ENCODE measurements at regions of chr19 and their contacts with region 1.

Region 1: GRCh38 chr19:12666265-12667048 is at the starts of genes MAN2B1 and WDR83:
- DNase-seq: peak; percentile 77 to 84 (median 79)
- H3K4me3 ChIP-seq: peak within 1 kb of the TSS; percentile 83
- H3K4me3 Mint-ChIP-seq: peak within 1 kb of the TSS; percentile 87 to 100 (median 97)
- H3K27ac ChIP-seq: peak within 1 kb of the TSS; percentile 72
- H3K27ac Mint-ChIP-seq: peak within 1 kb of the TSS; percentile 89 to 100 (median 98)
- H3K4me1 ChIP-seq: peaks cover 40% of the 10 kb centered on the region
- H3K4me1 Mint-ChIP-seq: peaks cover 43 to 59% (median 46%) of the 10 kb centered on the region in 3 donors
- H3K27me3 ChIP-seq: no peaks in the 10 kb centered on the region
- H3K27me3 Mint-ChIP-seq: no peaks in the 10 kb centered on the region
- total RNA-seq, gene MAN2B1: 83.8 to 85.3 TPM
- total RNA-seq, gene WDR83: 18.8 to 19.9 TPM

Region 2: GRCh38 chr19:12564016-12564664 is 102.3 kb before region 1 on chr19:
- CTCF ChIA-PET with region 1: interaction called, 19 read pairs
- POLR2A ChIA-PET with region 1: interaction called, 3 read pairs
- DNase-seq: peak; percentile 80 to 90 (median 86)
- H3K4me3 ChIP-seq: no peak overlapping the region
- H3K4me3 Mint-ChIP-seq: no peak overlapping the region
- H3K27ac ChIP-seq: no peak overlapping the region
- H3K27ac Mint-ChIP-seq: peak overlapping the region in 4 of 8 donors; percentile 2 to 71 (median 44)
- H3K4me1 ChIP-seq: no peaks in the 10 kb centered on the region
- H3K4me1 Mint-ChIP-seq: peaks cover 4 to 6% (median 5%) of the 10 kb centered on the region in 3 donors
- H3K27me3 ChIP-seq: no peaks in the 10 kb centered on the region
- H3K27me3 Mint-ChIP-seq: peaks cover 0 to 3% of the 10 kb centered on the region in 2 donors

Region 3: GRCh38 chr19:12610540-12611360 is 55.7 kb before region 1 on chr19 and contains the starts of genes ZNF490 and ZNF791:
- CTCF ChIA-PET with region 1: interaction called, 6 read pairs
- POLR2A ChIA-PET with region 1: interaction called, 12 read pairs
- DNase-seq: peak; percentile 93 to 98 (median 95)
- H3K4me3 ChIP-seq: peak within 1 kb of the TSS; percentile 93
- H3K4me3 Mint-ChIP-seq: peak within 1 kb of the TSS; percentile 99 to 100 (median 100)
- H3K27ac ChIP-seq: peak within 1 kb of the TSS; percentile 92
- H3K27ac Mint-ChIP-seq: peak within 1 kb of the TSS; percentile 94 to 100 (median 100)
- H3K4me1 ChIP-seq: peaks cover 42% of the 10 kb centered on the region
- H3K4me1 Mint-ChIP-seq: peaks cover 35 to 64% (median 48%) of the 10 kb centered on the region in 3 donors
- H3K27me3 ChIP-seq: no peaks in the 10 kb centered on the region
- H3K27me3 Mint-ChIP-seq: no peaks in the 10 kb centered on the region
- total RNA-seq, gene ZNF490: 8.0 to 8.4 TPM
- total RNA-seq, gene ZNF791: 23.6 to 23.8 TPM

Region 4: DNA sequence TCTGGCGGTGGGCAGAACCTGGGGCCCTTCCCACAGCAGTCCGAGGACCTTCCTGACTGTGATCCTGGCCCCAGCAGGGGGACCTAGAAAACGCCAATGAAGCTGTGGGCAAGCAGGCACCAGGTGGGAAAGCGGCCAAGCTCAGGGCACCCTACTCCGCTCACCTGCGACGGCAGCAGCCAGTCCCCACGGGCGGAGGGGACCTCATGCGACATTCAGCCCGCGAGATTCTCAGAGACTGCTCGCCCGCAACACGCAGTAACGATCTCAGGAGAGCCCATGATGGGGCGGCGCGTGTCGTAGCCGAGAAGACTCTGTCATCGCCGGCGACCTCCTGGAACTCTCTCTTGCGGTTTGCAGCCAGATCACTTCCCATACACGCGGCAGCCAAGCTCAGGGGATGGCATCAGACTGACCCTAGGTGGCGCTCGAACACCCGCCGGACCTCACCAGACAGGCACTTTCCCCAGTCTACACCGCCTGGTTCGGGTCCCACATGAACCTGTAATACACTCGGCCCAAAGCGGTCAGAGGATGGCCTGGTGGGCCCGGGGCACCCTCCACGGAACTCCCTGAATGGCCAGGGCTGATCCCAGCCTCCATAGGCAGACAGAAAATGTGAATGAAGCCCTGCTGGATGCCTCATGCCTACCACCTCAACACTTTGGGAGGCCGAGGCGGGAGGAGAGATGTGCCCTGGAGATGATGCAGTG is 26.4 kb before region 1 on chr19:
- CTCF ChIA-PET with region 1: interaction called, 15 read pairs
- POLR2A ChIA-PET with region 1: interaction called, 5 read pairs
- DNase-seq: peak; percentile 69 to 84 (median 73)
- H3K4me3 ChIP-seq: peak overlapping the region; percentile 45
- H3K4me3 Mint-ChIP-seq: peak overlapping the region; percentile 46 to 87 (median 77)
- H3K27ac ChIP-seq: no peak overlapping the region
- H3K27ac Mint-ChIP-seq: peak overlapping the region in 7 of 8 donors; percentile 4 to 92 (median 73)
- H3K4me1 ChIP-seq: peaks cover 11% of the 10 kb centered on the region
- H3K4me1 Mint-ChIP-seq: peaks cover 11 to 17% (median 12%) of the 10 kb centered on the region in 3 donors
- H3K27me3 ChIP-seq: no peaks in the 10 kb centered on the region
- H3K27me3 Mint-ChIP-seq: peaks cover 0 to 1% of the 10 kb centered on the region in 2 donors

Region 5: GRCh38 chr19:12681074-12681951 is 14.9 kb after region 1 on chr19 and contains the start of gene DHPS:
- CTCF ChIA-PET with region 1: interaction called, 32 read pairs
- POLR2A ChIA-PET with region 1: interaction called, 4 read pairs
- DNase-seq: peak; percentile 84 to 96 (median 91)
- H3K4me3 ChIP-seq: peak within 1 kb of the TSS; percentile 87
- H3K4me3 Mint-ChIP-seq: peak within 1 kb of the TSS; percentile 91 to 98 (median 95)
- H3K27ac ChIP-seq: peak within 1 kb of the TSS; percentile 84
- H3K27ac Mint-ChIP-seq: peak within 1 kb of the TSS; percentile 93 to 97 (median 96)
- H3K4me1 ChIP-seq: peaks cover 14% of the 10 kb centered on the region
- H3K4me1 Mint-ChIP-seq: peaks cover 16 to 34% (median 26%) of the 10 kb centered on the region in 3 donors
- H3K27me3 ChIP-seq: no peaks in the 10 kb centered on the region
- H3K27me3 Mint-ChIP-seq: peaks cover 0 to 4% of the 10 kb centered on the region in 2 donors
- total RNA-seq, gene DHPS: 113 to 116 TPM

Region 6: GRCh38 chr19:12784942-12785430 is 118.5 kb after region 1 on chr19:
- CTCF ChIA-PET with region 1: no interaction called
- POLR2A ChIA-PET with region 1: no interaction called
- DNase-seq: peak in 4 of 5 donors; percentile 46 to 79 (median 72)
- H3K4me3 ChIP-seq: no peak overlapping the region
- H3K4me3 Mint-ChIP-seq: no peak overlapping the region
- H3K27ac ChIP-seq: peak overlapping the region; percentile 84
- H3K27ac Mint-ChIP-seq: no peak overlapping the region
- H3K4me1 ChIP-seq: peaks cover 60% of the 10 kb centered on the region
- H3K4me1 Mint-ChIP-seq: peaks cover 18 to 31% (median 23%) of the 10 kb centered on the region in 3 donors
- H3K27me3 ChIP-seq: no peaks in the 10 kb centered on the region
- H3K27me3 Mint-ChIP-seq: no peaks in the 10 kb centered on the region